ENCODE measurements at regions of chr18 and their contacts with region 1.

Region 1: DNA sequence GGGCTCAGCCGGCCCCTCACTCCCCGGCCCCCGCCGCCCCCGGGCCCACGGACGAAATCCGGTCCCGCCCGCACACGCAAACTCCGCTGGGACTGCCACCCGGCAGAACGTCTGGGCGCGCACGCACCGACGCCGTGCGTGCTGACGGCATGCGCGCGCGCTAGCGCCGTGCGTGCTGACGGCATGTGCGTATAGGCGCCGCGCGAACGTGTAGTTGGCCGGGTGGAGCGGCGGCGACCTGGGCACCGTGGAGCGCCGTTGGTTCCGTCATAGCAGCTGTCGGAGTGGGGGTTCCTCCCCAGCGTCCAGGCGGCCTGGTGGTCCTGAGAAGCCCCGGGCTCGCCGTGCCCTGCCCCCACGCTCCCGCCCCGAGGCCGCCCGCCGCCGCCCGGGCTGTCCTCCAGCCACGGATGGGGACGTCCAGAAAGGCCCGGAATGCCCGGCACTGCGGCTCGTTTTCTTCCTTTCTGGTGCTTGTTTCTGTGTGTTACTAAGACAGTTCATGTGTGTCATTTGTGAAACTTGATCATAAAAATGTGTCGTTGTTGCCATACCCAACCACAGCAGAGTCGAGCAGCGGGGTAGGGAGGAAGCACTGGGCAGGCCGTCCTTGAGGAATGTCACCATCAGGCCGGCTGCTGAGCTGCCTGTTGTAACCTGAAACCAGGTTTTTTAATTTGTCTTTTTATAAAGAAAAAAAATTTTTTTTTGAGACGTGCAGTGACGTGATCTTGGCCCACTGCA is at the start of gene TXNL4A:
- DNase-seq: peak; percentile 54
- ATAC-seq: peak; percentile 97
- H3K4me3 ChIP-seq: peak within 1 kb of the TSS; percentile 72
- H3K27ac ChIP-seq: peak within 1 kb of the TSS; percentile 85
- H3K4me1 ChIP-seq: no peaks in the 10 kb centered on the region
- H3K27me3 ChIP-seq: no peaks in the 10 kb centered on the region
- CTCF ChIP-seq: no peak
- EP300 ChIP-seq: no peak
- POLR2A ChIP-seq: peak; percentile 94
- RAD21 ChIP-seq: no peak
- polyA plus RNA-seq, gene TXNL4A: 38.4 to 132 TPM

Region 2: GRCh38 chr18:79790996-79791972 is 197.3 kb before region 1 on chr18:
- CTCF ChIA-PET with region 1: no interaction called
- POLR2A ChIA-PET with region 1: no interaction called
- RAD21 ChIA-PET with region 1: no interaction called
- SMC1A ChIA-PET with region 1: no interaction called
- in situ Hi-C with region 1: no loop called
- intact Hi-C with region 1: loop called (anchors 10 kb)
- DNase-seq: no peak
- ATAC-seq: peak; percentile 62
- H3K4me3 ChIP-seq: no peak overlapping the region
- H3K27ac ChIP-seq: no peak overlapping the region
- H3K4me1 ChIP-seq: no peaks in the 10 kb centered on the region
- H3K27me3 ChIP-seq: peaks cover 0 to 2% of the 10 kb centered on the region in 2 experiments; a peak in 2 of 4 replicates
- CTCF ChIP-seq: no peak
- EP300 ChIP-seq: no peak
- POLR2A ChIP-seq: no peak
- RAD21 ChIP-seq: no peak

Region 3: GRCh38 chr18:79964330-79965118 is 24.1 kb before region 1 on chr18 and contains the start of gene HSBP1L1:
- CTCF ChIA-PET with region 1: interaction called, 9 read pairs
- POLR2A ChIA-PET with region 1: interaction called, 3 read pairs
- RAD21 ChIA-PET with region 1: interaction called, 9 read pairs
- SMC1A ChIA-PET with region 1: interaction called, 13 read pairs
- in situ Hi-C with region 1: no loop called
- intact Hi-C with region 1: no loop called
- DNase-seq: no peak
- ATAC-seq: peak; percentile 67
- H3K4me3 ChIP-seq: peak within 1 kb of the TSS; percentile 37
- H3K27ac ChIP-seq: peak within 1 kb of the TSS; percentile 68
- H3K4me1 ChIP-seq: peaks cover 25% of the 10 kb centered on the region
- H3K27me3 ChIP-seq: no peaks in the 10 kb centered on the region
- CTCF ChIP-seq: peak in 2 of 3 experiments; percentile 10 to 19; a peak in 1 of 6 replicates
- EP300 ChIP-seq: no peak
- POLR2A ChIP-seq: peak; percentile 81
- RAD21 ChIP-seq: no peak
- polyA plus RNA-seq, gene HSBP1L1: 0.97 to 2.1 TPM

Region 4: DNA sequence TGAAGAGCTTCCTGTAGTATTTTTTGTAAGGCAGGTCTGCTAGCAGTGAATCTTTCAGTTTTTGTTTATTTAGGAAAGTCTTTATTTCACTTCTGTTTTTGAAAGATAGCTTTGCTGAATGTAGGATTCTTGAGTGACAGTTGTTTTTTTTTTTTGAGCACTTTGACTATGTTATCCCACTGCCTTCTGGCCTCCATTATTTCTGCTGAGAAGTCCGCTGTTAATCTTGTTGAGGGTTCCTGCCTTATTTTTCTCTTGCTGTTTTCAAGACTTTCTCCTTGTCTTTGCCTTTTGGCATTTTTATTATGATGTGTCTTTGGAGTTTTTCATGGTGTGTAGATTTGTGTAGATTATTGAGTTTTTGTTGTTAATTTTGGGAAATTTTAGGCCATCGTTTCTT is 67.5 kb after region 1 on chr18:
- CTCF ChIA-PET with region 1: no interaction called
- POLR2A ChIA-PET with region 1: no interaction called
- RAD21 ChIA-PET with region 1: no interaction called
- SMC1A ChIA-PET with region 1: no interaction called
- in situ Hi-C with region 1: loop called (anchors 10 kb)
- intact Hi-C with region 1: no loop called
- DNase-seq: no peak
- ATAC-seq: no peak
- H3K4me3 ChIP-seq: no peak overlapping the region
- H3K27ac ChIP-seq: no peak overlapping the region
- H3K4me1 ChIP-seq: no peaks in the 10 kb centered on the region
- H3K27me3 ChIP-seq: no peaks in the 10 kb centered on the region
- CTCF ChIP-seq: no peak
- EP300 ChIP-seq: no peak
- POLR2A ChIP-seq: no peak
- RAD21 ChIP-seq: no peak

Region 5: GRCh38 chr18:80157708-80158343 is 169.2 kb after region 1 on chr18:
- CTCF ChIA-PET with region 1: interaction called, 5 read pairs
- POLR2A ChIA-PET with region 1: interaction called, 4 read pairs
- RAD21 ChIA-PET with region 1: no interaction called
- SMC1A ChIA-PET with region 1: no interaction called
- in situ Hi-C with region 1: no loop called
- intact Hi-C with region 1: loop called (anchors 5 kb)
- DNase-seq: peak; percentile 27
- ATAC-seq: peak; percentile 63
- H3K4me3 ChIP-seq: no peak overlapping the region
- H3K27ac ChIP-seq: no peak overlapping the region
- H3K4me1 ChIP-seq: no peaks in the 10 kb centered on the region
- H3K27me3 ChIP-seq: no peaks in the 10 kb centered on the region
- CTCF ChIP-seq: peak; percentile 85 to 96 (median 86)
- EP300 ChIP-seq: no peak
- POLR2A ChIP-seq: no peak
- RAD21 ChIP-seq: peak; percentile 87

Region 6: DNA sequence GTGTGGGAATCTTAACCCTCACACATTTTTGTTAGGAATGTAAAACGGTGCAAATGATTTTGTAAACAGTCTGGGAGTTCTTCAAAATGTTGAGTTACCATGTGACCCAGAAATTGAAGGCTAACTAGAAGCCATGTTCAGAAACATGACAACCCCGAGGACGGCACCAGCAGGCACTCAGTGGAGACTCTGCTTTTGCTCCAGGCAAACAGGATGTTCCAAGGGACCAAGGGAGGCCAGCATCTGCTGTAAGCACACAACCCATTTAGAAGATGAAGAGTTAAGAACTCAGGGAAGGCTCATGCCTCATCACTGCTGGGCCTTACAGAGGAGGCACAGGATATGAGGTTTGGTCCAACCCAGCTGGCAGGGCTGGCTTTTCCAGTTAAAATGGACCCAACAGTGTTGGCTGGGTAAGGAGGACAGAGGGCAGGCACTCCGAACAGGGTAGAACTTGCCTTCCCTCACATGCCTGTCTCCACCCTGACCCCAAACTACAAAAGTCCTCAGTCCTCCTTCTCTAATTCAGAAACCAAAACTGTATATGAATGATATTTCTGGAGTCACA is 235.0 kb after region 1 on chr18:
- CTCF ChIA-PET with region 1: no interaction called
- POLR2A ChIA-PET with region 1: no interaction called
- RAD21 ChIA-PET with region 1: no interaction called
- SMC1A ChIA-PET with region 1: no interaction called
- in situ Hi-C with region 1: no loop called
- intact Hi-C with region 1: no loop called
- DNase-seq: no peak
- ATAC-seq: no peak
- H3K4me3 ChIP-seq: no peak overlapping the region
- H3K27ac ChIP-seq: no peak overlapping the region
- H3K4me1 ChIP-seq: no peaks in the 10 kb centered on the region
- H3K27me3 ChIP-seq: peaks cover 0 to 6% of the 10 kb centered on the region in 2 experiments; a peak in 1 of 4 replicates
- CTCF ChIP-seq: no peak
- EP300 ChIP-seq: no peak
- POLR2A ChIP-seq: no peak
- RAD21 ChIP-seq: no peak